ENCODE measurements at regions of chr6 and their contacts with region 1.

Region 1: GRCh38 chr6:18387061-18387721 is at the start of gene RNF144B:
- DNase-seq: peak; percentile 95
- H3K4me3 ChIP-seq: peak within 1 kb of the TSS; percentile 79 to 96 (median 89)
- H3K27ac ChIP-seq: peak within 1 kb of the TSS; percentile 79
- H3K4me1 ChIP-seq: peaks cover 31% of the 10 kb centered on the region
- H3K27me3 ChIP-seq: no peaks in the 10 kb centered on the region
- CTCF ChIP-seq: no peak
- POLR2A ChIP-seq: peak; percentile 92
- total RNA-seq, gene RNF144B: 78.3 and 97.3 TPM in 2 replicates

Region 2: DNA sequence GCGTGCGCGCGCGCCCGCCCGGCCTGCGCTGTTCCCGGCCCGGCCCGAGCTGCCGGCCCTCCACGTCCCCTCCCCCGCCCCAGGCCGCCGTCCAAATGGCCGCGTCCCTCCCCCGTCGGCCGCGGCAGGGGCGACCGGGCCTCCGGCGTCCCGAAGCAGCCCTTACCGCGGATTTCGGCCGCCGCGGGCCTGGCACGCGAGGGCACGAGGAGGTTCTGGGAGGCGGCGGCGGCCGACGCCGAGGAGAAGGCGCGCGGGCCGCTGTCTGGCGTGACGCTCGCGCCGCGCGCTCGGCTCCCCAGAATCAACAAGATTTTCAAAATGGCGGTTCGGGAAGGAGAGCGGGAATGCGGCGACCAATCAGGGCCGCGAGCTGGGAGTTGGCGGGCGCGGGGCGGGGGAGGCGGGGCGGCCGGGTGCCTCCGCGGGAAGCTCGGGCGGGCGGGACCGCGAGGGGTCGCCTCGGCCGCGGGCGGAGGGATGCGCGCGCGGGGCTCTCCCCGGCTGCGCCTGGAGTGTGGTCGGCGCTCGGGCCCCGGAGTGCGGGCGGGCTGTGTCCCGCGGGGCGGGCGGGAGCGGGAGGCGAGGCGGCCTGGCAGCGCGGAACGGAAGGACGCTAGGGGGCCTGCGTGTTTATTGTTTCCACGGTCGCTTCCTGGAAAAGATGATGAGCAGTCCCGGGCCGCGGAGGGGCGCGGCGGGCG is 122.8 kb before region 1 on chr6 and contains the start of gene DEK:
- CTCF ChIA-PET with region 1: no interaction called
- POLR2A ChIA-PET with region 1: no interaction called
- dilution Hi-C with region 1: no loop called
- intact Hi-C with region 1: loop called (anchors 5 kb)
- DNase-seq: peak; percentile 80
- H3K4me3 ChIP-seq: peak within 1 kb of the TSS; percentile 63 to 94 (median 90)
- H3K27ac ChIP-seq: peak within 1 kb of the TSS; percentile 93
- H3K4me1 ChIP-seq: peaks cover 32% of the 10 kb centered on the region
- H3K27me3 ChIP-seq: peaks cover 6 to 8% of the 10 kb centered on the region in 2 experiments
- CTCF ChIP-seq: peak; percentile 26 to 50
- POLR2A ChIP-seq: peak; percentile 46
- total RNA-seq, gene DEK: 118 and 120 TPM in 2 replicates

Region 3: GRCh38 chr6:18343741-18344140 is 43.5 kb before region 1 on chr6:
- CTCF ChIA-PET with region 1: interaction called, 7 read pairs
- POLR2A ChIA-PET with region 1: interaction called, 3 read pairs
- dilution Hi-C with region 1: no loop called
- intact Hi-C with region 1: loop called (anchors 5 kb)
- DNase-seq: peak; percentile 91
- H3K4me3 ChIP-seq: no peak overlapping the region
- H3K27ac ChIP-seq: peak overlapping the region; percentile 69
- H3K4me1 ChIP-seq: peaks cover 16% of the 10 kb centered on the region
- H3K27me3 ChIP-seq: no peaks in the 10 kb centered on the region
- CTCF ChIP-seq: no peak
- POLR2A ChIP-seq: no peak

Region 4: DNA sequence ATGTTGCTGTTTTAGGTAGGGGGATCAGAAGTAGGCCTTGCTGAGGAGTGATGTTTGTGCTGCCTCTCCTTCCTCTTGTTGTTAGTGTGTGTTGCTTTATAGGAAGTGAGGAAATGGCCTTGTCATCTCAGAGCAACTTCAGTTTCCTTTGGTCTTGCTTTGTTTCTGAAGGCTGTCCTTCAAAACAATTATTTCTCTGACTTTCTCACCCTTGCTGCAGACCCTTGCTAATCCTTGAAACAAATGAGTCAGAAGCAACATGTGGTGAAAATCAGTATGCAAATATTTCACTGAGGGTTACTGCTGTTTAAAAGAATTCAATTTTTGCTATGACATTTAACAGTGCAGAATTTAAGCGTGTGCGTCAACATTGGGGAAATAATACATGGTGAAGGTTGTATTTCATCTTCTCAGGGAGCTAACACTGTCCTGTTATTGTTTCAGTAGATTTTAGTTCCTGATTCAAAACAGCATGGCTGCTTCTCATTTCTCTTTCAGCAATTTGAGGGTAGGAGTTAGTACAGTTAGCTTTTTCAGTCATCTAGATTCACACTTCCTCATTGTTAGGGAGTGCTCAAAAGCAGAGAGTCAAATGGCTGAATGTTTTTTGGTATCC is 13.7 kb after region 1 on chr6:
- CTCF ChIA-PET with region 1: interaction called, 13 read pairs
- POLR2A ChIA-PET with region 1: interaction called, 9 read pairs
- dilution Hi-C with region 1: no loop called
- intact Hi-C with region 1: loop called (anchors 1 kb)
- DNase-seq: peak; percentile 92
- H3K4me3 ChIP-seq: no peak overlapping the region
- H3K27ac ChIP-seq: peak overlapping the region; percentile 84
- H3K4me1 ChIP-seq: peaks cover 97% of the 10 kb centered on the region
- H3K27me3 ChIP-seq: no peaks in the 10 kb centered on the region
- CTCF ChIP-seq: no peak
- POLR2A ChIP-seq: peak; percentile 34

Region 5: GRCh38 chr6:18503593-18504231 is 116.5 kb after region 1 on chr6:
- CTCF ChIA-PET with region 1: interaction called, 11 read pairs
- POLR2A ChIA-PET with region 1: no interaction called
- dilution Hi-C with region 1: no loop called
- intact Hi-C with region 1: loop called (anchors 1 kb)
- DNase-seq: peak; percentile 83
- H3K4me3 ChIP-seq: peak overlapping the region; percentile 4 to 48 (median 20)
- H3K27ac ChIP-seq: peak overlapping the region; percentile 27
- H3K4me1 ChIP-seq: peaks cover 9% of the 10 kb centered on the region
- H3K27me3 ChIP-seq: no peaks in the 10 kb centered on the region
- CTCF ChIP-seq: peak; percentile 84 to 96
- POLR2A ChIP-seq: no peak